Activated CD4-positive, alpha-beta T cell treated with anti-CD3 and anti-CD28 coated beads for 36 hours (primary cell): ENCODE measurements at regions of chr1 and their contacts with region 1.

Region 1: DNA sequence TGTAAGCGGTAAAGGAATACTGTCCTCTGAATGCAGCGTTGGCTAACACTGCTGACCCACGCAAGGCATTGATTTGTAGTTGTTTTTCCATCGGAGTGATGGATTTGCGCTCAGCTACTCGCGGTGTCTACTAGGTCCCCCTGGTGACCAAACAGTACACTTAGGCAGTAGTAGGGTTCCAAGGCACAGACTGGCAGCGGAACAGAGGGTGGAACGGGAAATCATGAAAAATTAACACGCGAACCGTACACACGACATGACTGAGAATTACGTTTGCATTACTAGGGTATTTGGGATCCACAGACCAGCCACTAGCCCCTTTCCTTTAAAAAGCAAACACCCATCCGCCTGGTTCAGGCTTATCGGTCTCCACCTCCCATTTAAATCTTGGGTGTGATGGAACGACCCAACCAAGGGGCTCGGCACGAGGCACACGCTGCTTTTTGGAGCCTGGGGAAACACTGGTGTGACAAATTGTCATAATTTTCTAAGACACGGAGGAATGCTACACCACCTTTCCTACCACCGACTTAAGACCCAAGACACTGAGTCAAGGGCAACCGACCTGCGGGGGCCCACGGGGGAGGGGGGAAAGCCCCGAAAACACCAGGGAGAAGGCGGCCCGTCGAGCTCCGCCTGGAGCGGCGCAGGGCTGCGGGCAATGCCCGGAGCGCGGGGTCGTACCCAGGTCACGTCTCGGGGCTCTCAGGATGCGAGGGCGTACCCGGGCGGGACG is 699 bp downstream of the DIPK1A start:
- DNase-seq: peak; percentile 78
- ATAC-seq: peak; percentile 62
- H3K4me3 Mint-ChIP-seq: peak overlapping the region; percentile 94
- H3K27ac Mint-ChIP-seq: peak overlapping the region; percentile 95
- H3K4me1 Mint-ChIP-seq: peaks cover 36% of the 10 kb centered on the region
- H3K27me3 Mint-ChIP-seq: no peaks in the 10 kb centered on the region

Region 2: GRCh38 chr1:91885716-91886506 is 1074.7 kb before region 1 on chr1 and contains the start of gene TGFBR3:
- CTCF ChIA-PET with region 1: no interaction called
- POLR2A ChIA-PET with region 1: no interaction called
- intact Hi-C with region 1: loop called in 1 of 2 experiments (anchors 10 kb)
- DNase-seq: peak; percentile 76
- ATAC-seq: peak; percentile 70
- H3K4me3 Mint-ChIP-seq: peak within 1 kb of the TSS; percentile 87
- H3K27ac Mint-ChIP-seq: peak within 1 kb of the TSS; percentile 80
- H3K4me1 Mint-ChIP-seq: peaks cover 38% of the 10 kb centered on the region
- H3K27me3 Mint-ChIP-seq: peaks cover 16% of the 10 kb centered on the region
- total RNA-seq, gene TGFBR3: 4.2 to 4.5 TPM

Region 3: DNA sequence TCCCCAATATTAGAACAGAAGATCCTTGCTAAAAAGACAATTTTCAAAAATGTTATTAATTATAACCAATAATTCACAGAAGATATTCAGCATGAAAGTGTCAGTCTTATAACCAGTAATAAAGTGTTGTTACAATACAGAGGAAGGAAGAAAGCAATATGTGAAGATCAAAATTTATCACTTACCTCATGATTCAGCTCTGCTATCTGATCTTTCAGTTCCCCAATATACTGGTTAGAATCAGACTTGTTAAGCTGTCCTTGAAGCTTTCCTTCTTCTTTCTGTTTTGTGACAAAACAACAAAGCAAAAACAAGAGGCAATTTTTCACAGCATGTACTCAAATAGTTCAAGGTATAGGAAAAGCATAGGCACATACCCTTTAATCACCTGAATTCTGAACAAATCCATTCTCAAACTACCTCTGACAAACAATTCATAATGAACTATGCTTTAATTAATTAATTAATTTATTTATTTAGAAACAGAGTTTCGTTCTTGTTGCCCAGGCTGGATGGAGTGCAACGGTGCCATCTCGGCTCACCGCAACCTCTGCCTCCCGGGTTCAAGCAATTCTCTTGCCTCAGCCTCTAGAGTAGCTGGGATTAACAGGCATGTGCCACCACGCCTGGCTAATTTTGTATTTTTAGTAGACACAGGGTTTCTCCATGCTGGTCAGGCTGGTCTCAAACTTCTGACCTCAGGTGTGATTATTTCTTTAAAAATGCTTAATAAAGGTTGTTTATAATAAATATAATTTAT is 396.9 kb before region 1 on chr1:
- CTCF ChIA-PET with region 1: no interaction called
- POLR2A ChIA-PET with region 1: no interaction called
- intact Hi-C with region 1: no loop called
- DNase-seq: no peak
- ATAC-seq: peak; percentile 31
- H3K4me3 Mint-ChIP-seq: no peak overlapping the region
- H3K27ac Mint-ChIP-seq: no peak overlapping the region
- H3K4me1 Mint-ChIP-seq: peaks cover 32% of the 10 kb centered on the region
- H3K27me3 Mint-ChIP-seq: no peaks in the 10 kb centered on the region

Region 4: GRCh38 chr1:92577261-92577895 is 383.2 kb before region 1 on chr1:
- CTCF ChIA-PET with region 1: no interaction called
- POLR2A ChIA-PET with region 1: no interaction called
- intact Hi-C with region 1: loop called in 1 of 2 experiments (anchors 10 kb)
- DNase-seq: peak; percentile 42
- ATAC-seq: peak; percentile 62
- H3K4me3 Mint-ChIP-seq: peak overlapping the region; percentile 88
- H3K27ac Mint-ChIP-seq: peak overlapping the region; percentile 89
- H3K4me1 Mint-ChIP-seq: peaks cover 61% of the 10 kb centered on the region
- H3K27me3 Mint-ChIP-seq: no peaks in the 10 kb centered on the region

Region 5: GRCh38 chr1:92792340-92792782 is 168.2 kb before region 1 on chr1:
- CTCF ChIA-PET with region 1: no interaction called
- POLR2A ChIA-PET with region 1: no interaction called
- intact Hi-C with region 1: no loop called
- DNase-seq: no peak
- ATAC-seq: no peak
- H3K4me3 Mint-ChIP-seq: no peak overlapping the region
- H3K27ac Mint-ChIP-seq: no peak overlapping the region
- H3K4me1 Mint-ChIP-seq: peaks cover 3% of the 10 kb centered on the region
- H3K27me3 Mint-ChIP-seq: peaks cover 37% of the 10 kb centered on the region

Region 6: DNA sequence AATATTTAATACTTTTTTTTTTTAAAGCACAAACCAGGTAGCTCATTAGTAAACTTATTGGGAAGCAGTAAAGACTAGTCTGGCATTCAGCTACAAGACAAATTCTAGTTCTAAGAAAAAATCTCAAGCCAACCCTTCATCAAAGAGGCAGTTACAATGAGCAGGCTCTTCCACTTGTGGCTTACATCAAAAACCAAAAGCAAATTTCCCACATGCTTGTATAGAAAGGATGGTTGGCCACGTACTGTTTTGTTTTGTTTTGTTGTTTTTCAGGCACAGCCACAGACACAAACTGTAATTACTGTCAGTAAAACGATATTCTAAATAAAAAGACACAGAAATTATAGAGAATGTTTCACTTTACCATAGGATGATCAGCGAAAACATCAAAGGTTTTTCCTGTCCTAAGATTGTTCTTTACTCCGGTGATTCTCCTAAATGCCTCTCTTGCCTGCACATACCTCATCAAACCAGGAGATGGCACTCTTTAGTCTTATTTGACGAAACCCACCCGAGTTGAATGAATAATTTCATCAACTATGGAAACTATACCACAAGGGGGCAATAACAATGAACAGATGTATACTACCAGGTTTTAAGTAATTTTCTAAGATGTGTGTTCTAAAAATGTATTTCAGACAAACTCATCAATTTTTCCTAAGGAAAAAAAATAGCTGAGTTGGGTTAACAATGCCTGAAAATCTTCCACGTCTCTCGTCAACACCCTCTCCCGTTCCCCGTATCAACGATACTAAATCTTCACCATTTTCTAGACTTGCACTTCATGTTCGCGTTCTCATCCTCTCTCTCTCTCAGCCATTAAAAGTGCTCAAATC is 101.8 kb before region 1 on chr1:
- CTCF ChIA-PET with region 1: interaction called, 156 read pairs
- POLR2A ChIA-PET with region 1: interaction called, 3 read pairs
- intact Hi-C with region 1: loop called (anchors 1 kb)
- DNase-seq: peak; percentile 58
- ATAC-seq: peak; percentile 86
- H3K4me3 Mint-ChIP-seq: peak overlapping the region; percentile 48
- H3K27ac Mint-ChIP-seq: peak overlapping the region; percentile 48
- H3K4me1 Mint-ChIP-seq: peaks cover 17% of the 10 kb centered on the region
- H3K27me3 Mint-ChIP-seq: no peaks in the 10 kb centered on the region

Region 7: GRCh38 chr1:92929461-92929860 is 31.1 kb before region 1 on chr1:
- CTCF ChIA-PET with region 1: interaction called, 3 read pairs
- POLR2A ChIA-PET with region 1: no interaction called
- intact Hi-C with region 1: loop called in 1 of 2 experiments (anchors 1 kb)
- DNase-seq: no peak
- ATAC-seq: peak; percentile 30
- H3K4me3 Mint-ChIP-seq: no peak overlapping the region
- H3K27ac Mint-ChIP-seq: peak overlapping the region; percentile 32
- H3K4me1 Mint-ChIP-seq: peaks cover 37% of the 10 kb centered on the region
- H3K27me3 Mint-ChIP-seq: no peaks in the 10 kb centered on the region

Region 8: GRCh38 chr1:92980732-92981647 is 20.4 kb after region 1 on chr1:
- CTCF ChIA-PET with region 1: interaction called, 34 read pairs
- POLR2A ChIA-PET with region 1: interaction called, 12 read pairs
- intact Hi-C with region 1: loop called (anchors 1 to 2 kb)
- DNase-seq: peak; percentile 46
- ATAC-seq: peak; percentile 73
- H3K4me3 Mint-ChIP-seq: peak overlapping the region; percentile 47
- H3K27ac Mint-ChIP-seq: peak overlapping the region; percentile 97
- H3K4me1 Mint-ChIP-seq: peaks cover 54% of the 10 kb centered on the region
- H3K27me3 Mint-ChIP-seq: no peaks in the 10 kb centered on the region

Region 9: GRCh38 chr1:93179886-93180722 is 219.5 kb after region 1 on chr1 and contains the start of gene TMED5:
- CTCF ChIA-PET with region 1: no interaction called
- POLR2A ChIA-PET with region 1: no interaction called
- intact Hi-C with region 1: loop called (anchors 1 to 5 kb)
- DNase-seq: peak; percentile 98
- ATAC-seq: peak; percentile 85
- H3K4me3 Mint-ChIP-seq: peak within 1 kb of the TSS; percentile 89
- H3K27ac Mint-ChIP-seq: peak within 1 kb of the TSS; percentile 99
- H3K4me1 Mint-ChIP-seq: peaks cover 41% of the 10 kb centered on the region
- H3K27me3 Mint-ChIP-seq: no peaks in the 10 kb centered on the region
- total RNA-seq, gene TMED5: 32.6 to 33.0 TPM

Region 10: DNA sequence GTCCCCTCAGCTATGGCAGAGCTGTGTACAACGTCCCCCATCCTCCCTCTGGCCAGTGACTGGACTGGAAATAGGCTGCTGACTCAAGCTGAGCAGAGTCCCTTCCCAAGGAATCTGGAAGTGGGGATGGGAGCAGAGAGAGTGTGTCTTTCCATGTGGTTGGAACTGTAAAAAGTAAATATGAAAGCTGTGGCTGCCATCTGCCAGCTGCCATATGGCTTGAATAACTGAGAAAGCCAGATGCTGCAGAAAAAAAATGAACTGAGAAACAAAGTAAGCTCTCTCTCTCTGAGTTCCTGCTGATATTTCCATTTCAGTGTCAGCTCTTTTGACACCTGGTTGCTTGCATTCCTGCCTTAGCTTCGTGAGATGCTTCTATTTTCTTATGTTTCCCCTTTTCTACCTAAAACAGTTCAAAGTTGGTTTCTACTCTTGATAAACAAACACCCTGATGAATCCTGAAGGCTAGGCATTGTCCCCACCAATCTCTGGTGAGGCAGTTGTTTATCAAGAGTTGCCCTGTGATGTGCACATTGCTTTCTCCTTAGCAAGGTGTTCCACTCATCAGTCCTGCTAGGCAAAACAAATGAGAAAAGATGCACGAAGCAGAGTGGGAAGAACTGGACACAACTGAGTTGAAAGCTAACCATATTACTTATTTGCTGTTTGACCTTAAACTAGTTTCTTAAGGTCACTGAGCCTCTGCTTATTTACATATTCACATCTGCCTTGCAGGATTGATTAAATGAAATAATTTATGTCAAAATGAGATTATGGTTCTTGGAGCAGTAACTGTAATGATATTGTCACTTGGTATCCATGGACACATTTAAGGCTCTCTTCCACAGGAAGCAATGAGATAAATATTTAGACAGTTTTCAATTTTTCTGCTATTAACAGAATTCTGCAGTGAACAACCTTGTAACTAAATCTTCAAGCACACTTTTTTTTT is 368.5 kb after region 1 on chr1:
- CTCF ChIA-PET with region 1: no interaction called
- POLR2A ChIA-PET with region 1: no interaction called
- intact Hi-C with region 1: no loop called
- DNase-seq: no peak
- ATAC-seq: no peak
- H3K4me3 Mint-ChIP-seq: no peak overlapping the region
- H3K27ac Mint-ChIP-seq: no peak overlapping the region
- H3K4me1 Mint-ChIP-seq: peaks cover 3% of the 10 kb centered on the region
- H3K27me3 Mint-ChIP-seq: no peaks in the 10 kb centered on the region

Region 11: DNA sequence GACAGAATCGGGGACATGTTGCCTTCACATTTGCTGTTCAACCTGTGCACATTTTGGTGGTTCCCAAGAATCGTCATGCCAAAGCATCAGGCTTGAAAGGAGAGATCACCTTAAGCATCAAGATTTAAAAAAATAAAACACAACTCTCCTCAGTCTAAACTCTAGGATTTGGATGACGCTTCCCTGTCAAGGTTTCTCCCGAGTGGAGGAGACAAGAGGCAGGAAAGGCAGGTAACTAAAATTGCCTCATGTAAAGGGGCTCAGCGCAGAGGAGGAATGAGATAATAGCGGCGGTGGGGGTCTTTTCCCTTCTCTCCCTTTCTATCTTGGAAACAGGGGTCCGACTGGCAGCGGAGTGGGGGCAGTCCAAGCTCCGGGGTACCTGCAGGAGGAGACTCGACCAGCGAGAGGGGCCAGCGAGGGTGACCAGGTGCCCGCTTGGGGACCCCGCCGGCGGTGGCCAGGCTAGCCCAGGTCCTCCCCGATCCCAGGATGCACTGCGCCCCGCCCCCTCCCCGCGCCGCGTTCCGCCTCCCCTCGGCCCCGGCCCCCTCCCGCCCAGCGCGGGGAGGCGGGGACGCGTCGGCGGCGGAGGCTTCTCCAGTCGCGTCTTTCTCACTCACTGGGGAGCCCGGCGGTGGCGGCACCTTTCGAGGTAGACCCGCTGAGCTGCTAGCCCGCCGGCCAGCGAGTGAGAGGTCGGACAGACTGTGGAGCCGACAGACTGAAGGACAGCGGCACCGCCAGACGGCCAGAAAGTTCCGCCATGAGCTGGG is 487.1 kb after region 1 on chr1 and contains the start of gene FNBP1L:
- CTCF ChIA-PET with region 1: no interaction called
- POLR2A ChIA-PET with region 1: no interaction called
- intact Hi-C with region 1: no loop called
- DNase-seq: peak; percentile 81
- ATAC-seq: peak; percentile 87
- H3K4me3 Mint-ChIP-seq: peak within 1 kb of the TSS; percentile 83
- H3K27ac Mint-ChIP-seq: peak within 1 kb of the TSS; percentile 72
- H3K4me1 Mint-ChIP-seq: peaks cover 15% of the 10 kb centered on the region
- H3K27me3 Mint-ChIP-seq: peaks cover 24% of the 10 kb centered on the region
- total RNA-seq, gene FNBP1L: 1.2 to 1.4 TPM